Activated CD4-positive, alpha-beta memory T cell treated with anti-CD3 and anti-CD28 coated beads for 36 hours (primary cell): ENCODE measurements at regions of chr11 and their contacts with region 1.

Region 1: GRCh38 chr11:118928108-118928870 is 2.6 kb upstream of the BCL9L start:
- DNase-seq: peak; percentile 95
- H3K4me3 Mint-ChIP-seq: peak overlapping the region; percentile 94
- H3K27ac Mint-ChIP-seq: peak overlapping the region; percentile 98
- H3K4me1 Mint-ChIP-seq: peaks cover 44% of the 10 kb centered on the region
- H3K27me3 Mint-ChIP-seq: no peaks in the 10 kb centered on the region

Region 2: GRCh38 chr11:118870396-118871345 is 57.6 kb before region 1 on chr11:
- CTCF ChIA-PET with region 1: interaction called, 3 read pairs
- POLR2A ChIA-PET with region 1: interaction called, 3 read pairs
- intact Hi-C with region 1: loop called (anchors 1 kb)
- DNase-seq: peak; percentile 73
- H3K4me3 Mint-ChIP-seq: peak overlapping the region; percentile 83
- H3K27ac Mint-ChIP-seq: peak overlapping the region; percentile 99
- H3K4me1 Mint-ChIP-seq: peaks cover 56% of the 10 kb centered on the region
- H3K27me3 Mint-ChIP-seq: no peaks in the 10 kb centered on the region

Region 3: GRCh38 chr11:118889781-118890180 is 38.5 kb before region 1 on chr11:
- CTCF ChIA-PET with region 1: interaction called, 12 read pairs
- POLR2A ChIA-PET with region 1: interaction called, 3 read pairs
- intact Hi-C with region 1: loop called (anchors 5 kb)
- DNase-seq: no peak
- H3K4me3 Mint-ChIP-seq: no peak overlapping the region
- H3K27ac Mint-ChIP-seq: peak overlapping the region; percentile 93
- H3K4me1 Mint-ChIP-seq: peaks cover 86% of the 10 kb centered on the region
- H3K27me3 Mint-ChIP-seq: no peaks in the 10 kb centered on the region

Region 4: GRCh38 chr11:118914178-118914918 is 13.9 kb before region 1 on chr11:
- CTCF ChIA-PET with region 1: interaction called, 311 read pairs
- POLR2A ChIA-PET with region 1: interaction called, 56 read pairs
- intact Hi-C with region 1: loop called (anchors 1 kb)
- DNase-seq: peak; percentile 88
- H3K4me3 Mint-ChIP-seq: peak overlapping the region; percentile 57
- H3K27ac Mint-ChIP-seq: peak overlapping the region; percentile 100
- H3K4me1 Mint-ChIP-seq: peaks cover 87% of the 10 kb centered on the region
- H3K27me3 Mint-ChIP-seq: no peaks in the 10 kb centered on the region

Region 5: GRCh38 chr11:118997627-118998387 is 69.5 kb after region 1 on chr11 and contains the start of gene CENATAC:
- CTCF ChIA-PET with region 1: interaction called, 6 read pairs
- POLR2A ChIA-PET with region 1: interaction called, 3 read pairs
- intact Hi-C with region 1: loop called (anchors 1 kb)
- DNase-seq: peak; percentile 98
- H3K4me3 Mint-ChIP-seq: peak within 1 kb of the TSS; percentile 88
- H3K27ac Mint-ChIP-seq: peak within 1 kb of the TSS; percentile 94
- H3K4me1 Mint-ChIP-seq: peaks cover 28% of the 10 kb centered on the region
- H3K27me3 Mint-ChIP-seq: no peaks in the 10 kb centered on the region
- total RNA-seq, gene CENATAC: 21.4 to 22.3 TPM

Region 6: GRCh38 chr11:119121008-119121810 is 192.9 kb after region 1 on chr11 and contains the start of gene HINFP:
- CTCF ChIA-PET with region 1: no interaction called
- POLR2A ChIA-PET with region 1: no interaction called
- intact Hi-C with region 1: loop called (anchors 1 kb)
- DNase-seq: peak; percentile 100
- H3K4me3 Mint-ChIP-seq: peak within 1 kb of the TSS; percentile 88
- H3K27ac Mint-ChIP-seq: peak within 1 kb of the TSS; percentile 78
- H3K4me1 Mint-ChIP-seq: peaks cover 28% of the 10 kb centered on the region
- H3K27me3 Mint-ChIP-seq: no peaks in the 10 kb centered on the region
- total RNA-seq, gene HINFP: 22.3 to 24.3 TPM

Region 7: DNA sequence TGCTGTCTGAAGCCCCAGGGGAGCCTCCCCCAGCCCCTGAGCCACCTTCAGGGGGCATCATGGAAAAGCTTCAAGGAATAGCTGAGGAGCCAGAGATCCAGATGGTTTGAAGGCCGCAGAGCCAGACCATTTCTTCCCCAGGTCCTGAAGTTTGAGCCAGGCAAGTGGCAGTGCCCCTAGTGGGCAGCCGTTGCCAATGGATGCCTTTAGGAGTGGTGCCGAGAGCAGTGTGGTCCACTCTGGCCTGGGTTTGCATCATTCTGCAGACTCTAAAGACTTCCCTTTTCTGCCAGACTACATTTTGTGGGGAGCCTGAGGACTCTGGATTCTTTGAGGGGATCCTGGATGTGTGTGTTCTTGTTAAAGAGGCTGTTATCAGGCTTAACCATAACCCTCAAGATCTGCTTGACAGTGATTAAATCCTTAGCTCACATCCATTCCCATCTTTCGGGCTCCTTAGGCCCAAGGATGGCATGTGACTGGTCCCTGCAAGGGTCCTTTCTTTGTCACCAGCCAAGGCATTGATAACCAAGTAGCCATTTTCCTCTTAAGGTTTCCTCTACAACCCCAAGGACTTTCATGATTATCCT is 206.2 kb after region 1 on chr11:
- CTCF ChIA-PET with region 1: no interaction called
- POLR2A ChIA-PET with region 1: no interaction called
- intact Hi-C with region 1: no loop called
- DNase-seq: no peak
- H3K4me3 Mint-ChIP-seq: no peak overlapping the region
- H3K27ac Mint-ChIP-seq: no peak overlapping the region
- H3K4me1 Mint-ChIP-seq: no peaks in the 10 kb centered on the region
- H3K27me3 Mint-ChIP-seq: no peaks in the 10 kb centered on the region